Sigmoid colon (tissue), 7 donors: ENCODE measurements at regions of chr1 and their contacts with region 1.

Region 1: GRCh38 chr1:246497331-246497915 is 9.7 kb downstream of the SMYD3 start:
- DNase-seq: no peak
- H3K4me3 ChIP-seq: no peak overlapping the region
- H3K27ac ChIP-seq: no peak overlapping the region
- H3K4me1 ChIP-seq: peaks cover 0 to 4% (median under 1%) of the 10 kb centered on the region in 4 donors
- H3K27me3 ChIP-seq: no peaks in the 10 kb centered on the region
- CTCF ChIP-seq: peak; percentile 36 to 77 (median 70)
- EP300 ChIP-seq: no peak
- POLR2A ChIP-seq: no peak

Region 2: DNA sequence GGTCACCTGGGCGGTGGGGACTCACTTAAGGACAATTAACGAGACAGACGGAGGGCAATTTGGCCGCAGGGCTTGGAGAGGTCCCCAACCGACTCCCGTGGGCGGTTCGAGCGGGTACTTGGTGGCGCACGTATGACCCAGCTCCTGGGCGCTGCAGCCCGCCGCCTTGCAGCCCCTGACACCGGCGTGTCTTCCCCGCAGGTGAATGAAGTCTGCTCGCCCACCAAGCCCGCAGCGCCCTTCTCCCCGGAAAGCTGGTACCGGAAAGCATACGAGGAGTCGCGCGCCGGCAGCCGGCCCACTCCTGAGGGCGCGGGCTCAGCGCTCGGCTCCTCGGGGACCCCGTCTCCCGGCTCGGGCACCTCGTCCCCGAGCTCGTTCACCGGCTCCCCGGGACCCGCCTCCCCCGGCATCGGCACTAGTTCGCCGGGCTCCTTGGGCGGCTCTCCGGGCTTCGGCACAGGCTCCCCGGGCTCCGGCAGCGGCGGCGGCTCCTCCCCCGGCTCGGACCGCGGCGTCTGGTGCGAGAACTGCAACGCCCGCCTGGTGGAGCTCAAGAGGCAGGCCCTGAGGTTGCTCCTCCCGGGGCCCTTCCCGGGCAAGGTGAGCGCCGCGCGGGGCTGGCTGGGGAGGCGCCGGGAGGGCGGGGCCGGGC is 1341.2 kb before region 1 on chr1:
- intact Hi-C with region 1: loop called (anchors 2 kb)
- DNase-seq: peak; percentile 88
- H3K4me3 ChIP-seq: peak overlapping the region; percentile 30 to 58 (median 52)
- H3K27ac ChIP-seq: peak overlapping the region in 1 of 4 donors; percentile 34
- H3K4me1 ChIP-seq: peaks cover 0 to 42% (median 41%) of the 10 kb centered on the region in 4 donors
- H3K27me3 ChIP-seq: peaks cover 10 to 64% (median 36%) of the 10 kb centered on the region in 3 donors
- CTCF ChIP-seq: peak in 3 of 4 experiments; percentile 46 to 83 (median 53)
- EP300 ChIP-seq: no peak
- POLR2A ChIP-seq: no peak

Region 3: GRCh38 chr1:246012341-246012740 is 485.1 kb before region 1 on chr1:
- intact Hi-C with region 1: loop called (anchors 5 kb)
- DNase-seq: no peak
- H3K4me3 ChIP-seq: no peak overlapping the region
- H3K27ac ChIP-seq: no peak overlapping the region
- H3K4me1 ChIP-seq: no peaks in the 10 kb centered on the region
- H3K27me3 ChIP-seq: no peaks in the 10 kb centered on the region
- CTCF ChIP-seq: peak; percentile 7 to 58 (median 36)
- EP300 ChIP-seq: no peak
- POLR2A ChIP-seq: no peak

Region 4: DNA sequence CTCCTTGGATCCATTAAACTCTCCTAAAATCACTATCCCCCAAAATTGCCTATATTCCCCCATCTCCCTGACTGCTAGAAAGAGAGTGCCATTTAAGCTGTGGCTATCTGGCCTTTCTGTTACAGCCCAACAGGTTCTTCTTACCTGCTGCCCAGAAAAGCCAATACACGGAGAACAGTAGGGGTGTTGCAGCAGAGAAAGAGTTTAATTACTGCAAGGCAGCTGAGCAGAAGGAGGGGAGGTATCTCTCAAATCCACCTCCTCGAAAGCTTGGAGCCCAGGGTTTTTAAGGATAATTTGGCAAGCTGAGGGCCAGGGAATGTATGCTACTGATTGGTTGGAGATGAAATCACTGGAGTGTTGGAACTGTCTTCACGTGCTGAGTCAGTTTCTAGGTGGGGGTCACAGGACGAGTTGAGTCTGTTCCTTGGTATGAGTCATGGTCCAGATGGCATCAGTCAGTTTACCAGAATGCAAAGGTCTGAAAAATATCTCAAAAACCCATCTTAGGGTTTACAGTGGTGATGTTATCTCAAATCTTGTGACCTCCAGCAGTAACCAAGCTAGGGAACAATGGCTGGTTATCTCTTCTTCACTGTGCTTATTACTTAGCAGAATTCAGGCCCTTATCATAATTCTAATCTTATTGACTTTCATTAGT is 80.1 kb before region 1 on chr1:
- intact Hi-C with region 1: no loop called
- DNase-seq: no peak
- H3K4me3 ChIP-seq: no peak overlapping the region
- H3K27ac ChIP-seq: no peak overlapping the region
- H3K4me1 ChIP-seq: no peaks in the 10 kb centered on the region
- H3K27me3 ChIP-seq: no peaks in the 10 kb centered on the region
- CTCF ChIP-seq: no peak
- EP300 ChIP-seq: no peak
- POLR2A ChIP-seq: no peak

Region 5: GRCh38 chr1:246554201-246554600 is 56.8 kb after region 1 on chr1:
- intact Hi-C with region 1: no loop called
- DNase-seq: no peak
- H3K4me3 ChIP-seq: no peak overlapping the region
- H3K27ac ChIP-seq: no peak overlapping the region
- H3K4me1 ChIP-seq: no peaks in the 10 kb centered on the region
- H3K27me3 ChIP-seq: no peaks in the 10 kb centered on the region
- CTCF ChIP-seq: no peak
- EP300 ChIP-seq: no peak
- POLR2A ChIP-seq: no peak

Region 6: GRCh38 chr1:246597340-246597739 is 99.9 kb after region 1 on chr1:
- intact Hi-C with region 1: no loop called
- DNase-seq: peak; percentile 87
- H3K4me3 ChIP-seq: no peak overlapping the region
- H3K27ac ChIP-seq: peak overlapping the region; percentile 41 to 76 (median 74)
- H3K4me1 ChIP-seq: peaks cover 0 to 68% (median 51%) of the 10 kb centered on the region in 4 donors
- H3K27me3 ChIP-seq: no peaks in the 10 kb centered on the region
- CTCF ChIP-seq: no peak
- EP300 ChIP-seq: peak; percentile 12 to 87 (median 57)
- POLR2A ChIP-seq: no peak

Region 7: GRCh38 chr1:246609632-246610031 is 112.2 kb after region 1 on chr1:
- intact Hi-C with region 1: no loop called
- DNase-seq: no peak
- H3K4me3 ChIP-seq: no peak overlapping the region
- H3K27ac ChIP-seq: peak overlapping the region; percentile 22 to 73 (median 71)
- H3K4me1 ChIP-seq: peaks cover 5 to 59% (median 51%) of the 10 kb centered on the region in 4 donors
- H3K27me3 ChIP-seq: no peaks in the 10 kb centered on the region
- CTCF ChIP-seq: no peak
- EP300 ChIP-seq: no peak
- POLR2A ChIP-seq: no peak

Region 8: GRCh38 chr1:246699095-246699735 is 201.8 kb after region 1 on chr1:
- intact Hi-C with region 1: loop called (anchors 1 kb)
- DNase-seq: peak; percentile 95
- H3K4me3 ChIP-seq: peak overlapping the region; percentile 17 to 37 (median 27)
- H3K27ac ChIP-seq: peak overlapping the region; percentile 6 to 74 (median 56)
- H3K4me1 ChIP-seq: peaks cover 0 to 10% (median 2%) of the 10 kb centered on the region in 4 donors
- H3K27me3 ChIP-seq: no peaks in the 10 kb centered on the region
- CTCF ChIP-seq: peak; percentile 62 to 79 (median 69)
- EP300 ChIP-seq: no peak
- POLR2A ChIP-seq: no peak

Region 9: GRCh38 chr1:246753670-246754535 is 256.5 kb after region 1 on chr1:
- intact Hi-C with region 1: loop called (anchors 5 kb)
- DNase-seq: peak; percentile 77
- H3K4me3 ChIP-seq: no peak overlapping the region
- H3K27ac ChIP-seq: peak overlapping the region in 2 of 4 donors; percentile 61 to 62
- H3K4me1 ChIP-seq: peaks cover 0 to 21% (median 14%) of the 10 kb centered on the region in 4 donors
- H3K27me3 ChIP-seq: no peaks in the 10 kb centered on the region
- CTCF ChIP-seq: peak; percentile 57 to 82 (median 69)
- EP300 ChIP-seq: no peak
- POLR2A ChIP-seq: no peak